Ovary (tissue), 10 donors: ENCODE measurements at regions of chr3 and their contacts with region 1.

Region 1: DNA sequence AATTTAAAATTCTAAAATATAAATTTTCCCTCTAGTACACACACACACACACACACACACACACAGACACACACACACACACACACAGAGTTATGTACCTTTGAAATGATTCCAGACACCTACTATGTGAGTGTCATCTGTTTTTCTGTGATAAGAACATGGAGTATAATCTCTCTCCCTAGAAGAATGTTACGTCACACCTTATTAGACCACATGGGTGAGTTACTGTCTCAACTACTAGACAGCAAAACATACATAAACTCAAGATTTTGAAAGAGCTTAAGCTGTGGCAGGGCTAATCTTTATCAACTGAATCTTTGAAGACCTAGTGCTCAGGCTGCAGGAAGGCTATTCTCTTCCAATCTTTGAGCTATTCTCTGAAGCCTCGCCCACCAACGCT is 385.9 kb upstream of the BCHE start:
- DNase-seq: no peak
- H3K4me3 ChIP-seq: no peak overlapping the region
- H3K27ac ChIP-seq: no peak overlapping the region
- H3K4me1 ChIP-seq: no peaks in the 10 kb centered on the region
- H3K27me3 ChIP-seq: no peaks in the 10 kb centered on the region
- CTCF ChIP-seq: no peak
- EP300 ChIP-seq: no peak
- POLR2A ChIP-seq: no peak

Region 2: GRCh38 chr3:166205158-166205557 is 18.0 kb before region 1 on chr3:
- intact Hi-C with region 1: loop called in 1 of 4 experiments (anchors 2 kb)
- DNase-seq: no peak
- H3K4me3 ChIP-seq: no peak overlapping the region
- H3K27ac ChIP-seq: no peak overlapping the region
- H3K4me1 ChIP-seq: no peaks in the 10 kb centered on the region
- H3K27me3 ChIP-seq: no peaks in the 10 kb centered on the region
- CTCF ChIP-seq: no peak
- EP300 ChIP-seq: no peak
- POLR2A ChIP-seq: no peak

Region 3: GRCh38 chr3:166425899-166426575 is 202.9 kb after region 1 on chr3:
- intact Hi-C with region 1: no loop called
- DNase-seq: no peak
- H3K4me3 ChIP-seq: no peak overlapping the region
- H3K27ac ChIP-seq: no peak overlapping the region
- H3K4me1 ChIP-seq: no peaks in the 10 kb centered on the region
- H3K27me3 ChIP-seq: no peaks in the 10 kb centered on the region
- CTCF ChIP-seq: no peak
- EP300 ChIP-seq: no peak
- POLR2A ChIP-seq: no peak